ENCODE measurements at regions of chr1 and their contacts with region 1.

Region 1: GRCh38 chr1:111399792-111400610 is 27.5 kb downstream of the OVGP1 start:
- DNase-seq: peak; percentile 46
- H3K4me3 ChIP-seq: no peak overlapping the region
- H3K27ac ChIP-seq: no peak overlapping the region
- H3K4me1 ChIP-seq: no peaks in the 10 kb centered on the region
- H3K27me3 ChIP-seq: peaks cover 0 to 12% of the 10 kb centered on the region in 2 experiments
- CTCF ChIP-seq: peak; percentile 41 to 55
- POLR2A ChIP-seq: no peak

Region 2: GRCh38 chr1:111006541-111006940 is 393.5 kb before region 1 on chr1:
- CTCF ChIA-PET with region 1: no interaction called
- POLR2A ChIA-PET with region 1: no interaction called
- dilution Hi-C with region 1: no loop called
- intact Hi-C with region 1: no loop called
- DNase-seq: no peak
- H3K4me3 ChIP-seq: no peak overlapping the region
- H3K27ac ChIP-seq: no peak overlapping the region
- H3K4me1 ChIP-seq: no peaks in the 10 kb centered on the region
- H3K27me3 ChIP-seq: no peaks in the 10 kb centered on the region
- CTCF ChIP-seq: no peak
- POLR2A ChIP-seq: no peak

Region 3: GRCh38 chr1:111030590-111030989 is 369.4 kb before region 1 on chr1:
- CTCF ChIA-PET with region 1: interaction called, 19 read pairs
- POLR2A ChIA-PET with region 1: no interaction called
- dilution Hi-C with region 1: no loop called
- intact Hi-C with region 1: loop called (anchors 5 kb)
- DNase-seq: peak; percentile 50
- H3K4me3 ChIP-seq: no peak overlapping the region
- H3K27ac ChIP-seq: no peak overlapping the region
- H3K4me1 ChIP-seq: no peaks in the 10 kb centered on the region
- H3K27me3 ChIP-seq: no peaks in the 10 kb centered on the region
- CTCF ChIP-seq: peak; percentile 70 to 72
- POLR2A ChIP-seq: no peak

Region 4: DNA sequence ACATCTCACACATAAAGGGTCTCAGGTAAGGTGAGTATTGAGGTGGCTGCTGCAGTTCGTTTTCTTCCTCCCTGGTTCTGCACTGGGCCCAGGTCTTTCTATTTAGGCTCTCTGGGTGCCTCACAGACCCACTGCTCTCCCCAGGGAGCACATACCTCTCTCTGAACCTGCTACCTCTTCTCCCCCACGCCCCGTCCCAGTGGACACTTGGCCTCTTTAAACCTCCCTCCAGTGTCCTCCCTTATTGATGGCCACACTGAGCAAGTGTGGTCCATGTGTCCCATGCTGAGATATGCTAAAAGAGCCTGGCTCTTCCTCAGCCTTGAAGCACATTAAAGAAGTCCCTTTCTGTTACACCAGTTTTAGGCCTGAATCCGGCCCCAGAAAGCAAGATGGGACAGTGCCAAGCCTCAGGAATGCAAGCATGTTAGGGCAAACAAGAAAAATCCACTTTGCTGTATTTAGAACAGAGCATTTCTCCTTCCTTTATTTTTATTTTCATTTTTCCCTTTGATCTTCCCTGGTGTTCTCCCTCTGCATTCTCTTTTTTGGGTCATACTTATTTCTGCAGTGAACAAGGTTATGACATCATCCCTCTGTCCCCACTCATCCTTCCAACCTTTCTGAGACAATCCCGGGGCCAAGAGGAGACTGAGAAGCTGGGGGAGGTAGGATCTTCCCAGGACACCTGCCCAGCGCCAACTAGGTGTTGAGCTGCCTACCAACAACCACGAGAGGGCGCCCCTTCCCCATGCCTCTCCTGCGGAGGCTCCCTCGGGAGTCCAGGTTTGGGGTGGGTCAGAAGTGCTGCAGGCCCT is 177.5 kb before region 1 on chr1:
- CTCF ChIA-PET with region 1: interaction called, 266 read pairs
- POLR2A ChIA-PET with region 1: no interaction called
- dilution Hi-C with region 1: no loop called
- intact Hi-C with region 1: loop called (anchors 1 kb)
- DNase-seq: peak; percentile 56
- H3K4me3 ChIP-seq: no peak overlapping the region
- H3K27ac ChIP-seq: no peak overlapping the region
- H3K4me1 ChIP-seq: no peaks in the 10 kb centered on the region
- H3K27me3 ChIP-seq: peaks cover 5 to 8% of the 10 kb centered on the region in 2 experiments
- CTCF ChIP-seq: peak; percentile 80 to 97
- POLR2A ChIP-seq: no peak

Region 5: DNA sequence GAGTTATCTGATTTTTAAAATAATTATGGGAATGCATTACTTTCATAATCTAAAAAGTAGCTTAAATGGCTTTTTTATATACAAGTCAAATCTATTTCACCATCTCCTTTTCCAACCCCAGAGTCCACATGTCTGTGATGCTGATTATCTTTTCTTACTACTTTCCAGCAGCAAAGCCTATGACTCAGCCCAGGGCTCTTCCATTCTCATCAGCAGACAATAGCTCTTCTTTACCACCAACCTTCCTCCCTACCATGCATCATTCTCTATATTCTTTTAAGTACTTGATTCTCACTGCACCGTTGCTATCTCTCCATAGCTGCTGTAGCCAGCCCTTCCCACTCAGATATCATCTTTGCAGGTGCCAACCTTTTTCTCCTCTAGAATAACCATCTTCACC is 33.7 kb before region 1 on chr1:
- CTCF ChIA-PET with region 1: interaction called, 14 read pairs
- POLR2A ChIA-PET with region 1: no interaction called
- dilution Hi-C with region 1: no loop called
- intact Hi-C with region 1: no loop called
- DNase-seq: no peak
- H3K4me3 ChIP-seq: no peak overlapping the region
- H3K27ac ChIP-seq: no peak overlapping the region
- H3K4me1 ChIP-seq: peaks cover 5% of the 10 kb centered on the region
- H3K27me3 ChIP-seq: peaks cover 0 to 16% of the 10 kb centered on the region in 2 experiments
- CTCF ChIP-seq: no peak
- POLR2A ChIP-seq: no peak

Region 6: DNA sequence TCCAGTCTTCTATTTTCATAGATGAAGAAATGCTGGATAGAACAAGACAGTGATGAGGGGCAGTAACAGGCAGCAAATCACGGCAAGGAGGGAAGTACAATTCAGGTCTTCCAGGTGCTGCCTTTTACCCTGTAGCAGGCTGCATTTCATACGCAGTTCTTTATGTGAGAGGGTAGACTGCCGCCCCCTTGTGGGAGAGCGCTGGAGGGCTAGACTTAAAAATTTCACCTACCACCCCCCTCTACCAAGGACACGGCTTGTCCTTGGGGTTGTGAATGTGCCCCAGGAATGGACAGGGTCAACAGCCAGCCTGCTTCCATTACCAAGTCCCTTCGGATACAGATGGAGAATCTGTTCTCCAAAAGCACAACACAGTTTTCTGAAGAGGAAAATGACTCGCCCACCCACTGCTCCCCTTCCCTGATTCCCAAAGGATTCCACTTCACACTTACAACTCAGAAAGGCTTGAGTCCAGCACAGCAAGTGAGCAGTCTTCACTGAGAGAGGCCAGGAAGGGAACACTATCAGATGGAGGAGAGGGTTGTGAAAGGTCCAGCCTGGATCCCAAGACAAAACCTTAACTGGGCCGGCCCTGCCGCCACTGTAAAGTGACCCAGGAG is 41.7 kb after region 1 on chr1:
- CTCF ChIA-PET with region 1: interaction called, 13 read pairs
- POLR2A ChIA-PET with region 1: no interaction called
- dilution Hi-C with region 1: no loop called
- intact Hi-C with region 1: no loop called
- DNase-seq: peak; percentile 29
- H3K4me3 ChIP-seq: no peak overlapping the region
- H3K27ac ChIP-seq: no peak overlapping the region
- H3K4me1 ChIP-seq: no peaks in the 10 kb centered on the region
- H3K27me3 ChIP-seq: no peaks in the 10 kb centered on the region
- CTCF ChIP-seq: peak; percentile 42 to 59
- POLR2A ChIP-seq: no peak

Region 7: GRCh38 chr1:111497592-111497991 is 97.6 kb after region 1 on chr1:
- CTCF ChIA-PET with region 1: no interaction called
- POLR2A ChIA-PET with region 1: no interaction called
- dilution Hi-C with region 1: no loop called
- intact Hi-C with region 1: no loop called
- DNase-seq: no peak
- H3K4me3 ChIP-seq: no peak overlapping the region
- H3K27ac ChIP-seq: no peak overlapping the region
- H3K4me1 ChIP-seq: no peaks in the 10 kb centered on the region
- H3K27me3 ChIP-seq: peaks cover 18 to 29% of the 10 kb centered on the region in 2 experiments
- CTCF ChIP-seq: no peak
- POLR2A ChIP-seq: no peak

Measured in endothelial cell of umbilical vein (primary cell).